MCF 10A (cell line): ENCODE measurements at regions of chr6 and their contacts with region 1.

Region 1: GRCh38 chr6:31945507-31946369 is at the start of gene CFB:
- DNase-seq: peak; percentile 94
- H3K4me3 Mint-ChIP-seq: peak within 1 kb of the TSS; percentile 64
- H3K27ac Mint-ChIP-seq: peak within 1 kb of the TSS; percentile 90
- H3K4me1 Mint-ChIP-seq: peaks cover 59% of the 10 kb centered on the region
- H3K27me3 Mint-ChIP-seq: no peaks in the 10 kb centered on the region
- CTCF ChIP-seq: no peak
- total RNA-seq, gene CFB: 24.5 and 24.6 TPM in 2 replicates

Region 2: DNA sequence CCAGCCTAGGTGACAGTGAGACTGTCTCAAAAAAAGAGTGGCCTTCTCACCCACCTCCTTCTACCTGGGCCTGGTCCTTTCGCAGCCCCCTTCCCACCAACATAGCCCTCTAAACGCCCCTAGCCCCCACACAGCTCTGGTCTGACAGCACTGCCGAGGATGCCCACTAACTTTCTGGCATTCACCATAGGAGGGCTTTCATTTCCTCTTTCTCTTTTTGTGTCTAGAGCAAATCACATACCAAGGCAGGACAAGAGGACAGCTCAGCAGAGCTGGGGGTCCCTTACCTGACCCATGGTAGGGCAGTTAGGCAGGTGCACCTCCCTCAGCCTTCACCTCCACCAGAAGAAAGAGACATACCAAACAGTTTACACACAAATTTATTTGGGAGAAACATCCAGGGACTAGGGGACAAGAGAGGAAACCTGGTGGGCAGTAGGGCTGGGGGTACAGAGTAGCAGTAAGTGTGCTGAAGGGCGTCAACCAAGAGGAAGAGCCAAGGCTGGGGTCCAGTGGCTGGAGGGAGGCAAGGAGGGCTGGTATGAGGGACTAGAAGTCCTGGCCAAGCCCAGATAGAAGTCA is 269.3 kb before region 1 on chr6:
- CTCF ChIA-PET with region 1: no interaction called
- POLR2A ChIA-PET with region 1: no interaction called
- intact Hi-C with region 1: no loop called
- DNase-seq: no peak
- H3K4me3 Mint-ChIP-seq: no peak overlapping the region
- H3K27ac Mint-ChIP-seq: no peak overlapping the region
- H3K4me1 Mint-ChIP-seq: peaks cover 12% of the 10 kb centered on the region
- H3K27me3 Mint-ChIP-seq: peaks cover 18% of the 10 kb centered on the region
- CTCF ChIP-seq: no peak

Region 3: GRCh38 chr6:31901953-31902643 is 43.6 kb before region 1 on chr6 and contains the start of gene ZBTB12:
- CTCF ChIA-PET with region 1: interaction called, 32 read pairs
- POLR2A ChIA-PET with region 1: interaction called, 37 read pairs
- intact Hi-C with region 1: no loop called
- DNase-seq: peak; percentile 93
- H3K4me3 Mint-ChIP-seq: peak within 1 kb of the TSS; percentile 67
- H3K27ac Mint-ChIP-seq: peak within 1 kb of the TSS; percentile 33
- H3K4me1 Mint-ChIP-seq: peaks cover 24% of the 10 kb centered on the region
- H3K27me3 Mint-ChIP-seq: no peaks in the 10 kb centered on the region
- CTCF ChIP-seq: no peak
- total RNA-seq, gene ZBTB12: 3.6 and 4.0 TPM in 2 replicates

Region 4: DNA sequence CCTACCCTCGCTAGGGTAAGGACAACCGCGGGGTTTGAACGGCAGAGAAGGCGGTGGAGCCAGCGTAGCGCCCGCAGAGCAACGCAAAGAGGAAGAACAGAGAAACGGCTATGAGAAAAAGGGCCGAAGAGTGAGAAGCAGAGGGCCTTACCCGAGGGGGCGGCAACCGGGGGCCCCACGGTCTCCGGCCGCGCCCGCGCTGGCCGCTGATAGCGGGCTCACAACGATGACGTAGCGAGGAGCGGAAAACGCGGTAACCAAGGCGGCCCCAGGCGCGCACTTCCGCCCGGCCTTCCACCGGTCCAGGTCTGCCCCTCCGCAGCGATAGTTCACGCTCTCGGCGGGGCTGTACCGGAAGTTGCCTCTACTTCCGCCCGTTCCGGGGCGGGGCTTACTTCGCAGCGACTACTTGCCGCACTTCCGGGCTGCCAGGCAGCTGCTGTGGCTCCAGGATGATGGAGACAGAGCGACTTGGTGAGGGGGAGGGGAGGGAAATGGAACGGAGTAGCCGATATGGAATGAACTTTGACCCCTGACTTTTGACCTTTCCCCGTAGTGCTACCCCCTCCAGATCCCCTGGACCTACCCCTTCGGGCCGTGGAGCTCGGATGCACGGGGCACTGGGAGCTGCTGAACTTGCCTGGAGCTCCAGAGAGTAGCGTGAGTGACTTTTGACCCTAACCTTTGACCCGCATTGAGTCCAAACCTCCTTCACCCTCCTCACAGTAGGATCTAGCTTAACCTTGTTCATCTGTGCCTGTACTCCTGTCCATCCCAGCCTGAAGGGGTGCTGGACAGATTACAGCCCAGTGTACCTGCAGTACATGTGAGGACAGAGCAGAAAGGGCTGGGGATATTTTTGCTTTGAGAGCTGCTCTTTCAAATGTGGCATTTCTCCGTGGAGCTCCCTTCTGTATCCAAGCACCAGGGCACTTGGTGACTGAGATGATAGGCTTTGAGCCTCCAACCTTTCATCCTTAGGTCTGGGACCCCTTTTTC is 13.3 kb after region 1 on chr6 and contains the starts of genes NELFE and SKIC2:
- CTCF ChIA-PET with region 1: interaction called, 3 read pairs
- POLR2A ChIA-PET with region 1: interaction called, 24 read pairs
- intact Hi-C with region 1: no loop called
- DNase-seq: peak; percentile 96
- H3K4me3 Mint-ChIP-seq: peak within 1 kb of the TSS; percentile 88
- H3K27ac Mint-ChIP-seq: peak within 1 kb of the TSS; percentile 97
- H3K4me1 Mint-ChIP-seq: peaks cover 9% of the 10 kb centered on the region
- H3K27me3 Mint-ChIP-seq: no peaks in the 10 kb centered on the region
- CTCF ChIP-seq: no peak
- total RNA-seq, gene NELFE: 90.7 and 113 TPM in 2 replicates
- total RNA-seq, gene SKIC2: 53.1 and 66.2 TPM in 2 replicates